GM12878 (cell line): ENCODE measurements at regions of chr14 and their contacts with region 1.

Region 1: DNA sequence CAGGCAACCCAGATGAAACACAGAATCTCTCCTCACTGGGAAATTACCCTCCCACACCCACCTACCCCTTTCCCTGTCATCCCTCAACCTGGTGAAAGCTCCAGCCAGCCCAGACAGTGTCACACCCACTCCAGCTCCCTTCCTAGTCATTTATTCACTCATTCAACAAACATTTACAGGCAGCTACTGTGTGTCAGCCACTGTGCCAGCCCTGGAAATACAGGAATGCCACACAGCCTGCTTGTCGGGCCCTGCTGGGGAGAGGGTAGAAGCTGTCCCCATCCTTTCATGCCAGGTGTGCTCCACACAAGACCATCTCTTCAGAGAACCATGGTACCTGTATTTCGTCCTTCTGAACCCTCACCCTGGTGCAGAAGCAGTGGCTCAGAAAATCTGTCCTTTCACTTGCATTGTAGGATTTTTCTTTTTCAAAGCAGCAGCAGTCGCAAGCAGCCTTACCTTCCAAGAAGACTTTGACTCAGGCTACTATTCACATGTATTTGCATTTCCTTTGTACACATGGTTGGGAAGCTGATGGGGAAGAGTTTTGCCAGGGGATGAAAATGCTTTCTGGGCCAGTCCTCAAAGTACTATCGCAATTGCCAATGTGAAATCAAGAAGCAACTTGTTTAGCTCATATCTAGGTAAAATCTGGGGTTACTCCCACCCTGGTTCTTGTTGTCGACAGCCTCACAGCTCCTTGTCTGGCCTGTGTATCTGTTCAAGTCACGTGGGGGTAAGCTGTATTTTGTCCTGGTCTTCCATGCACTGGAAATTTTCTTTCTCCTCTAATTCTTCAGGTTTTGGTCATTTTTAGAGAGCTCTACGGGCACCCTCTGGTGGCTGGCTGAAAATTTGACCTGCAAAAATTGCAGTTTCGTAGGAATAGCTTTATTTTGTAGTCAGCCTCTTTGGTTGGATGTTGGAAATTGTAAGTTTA is 147.4 kb upstream of the EGLN3 start:
- DNase-seq: peak; percentile 36
- ATAC-seq: peak; percentile 59
- H3K4me3 ChIP-seq: no peak overlapping the region
- H3K27ac ChIP-seq: no peak overlapping the region
- H3K4me1 ChIP-seq: no peaks in the 10 kb centered on the region
- H3K27me3 ChIP-seq: no peaks in the 10 kb centered on the region
- CTCF ChIP-seq: peak; percentile 57 to 74 (median 63); a peak in 5 of 6 replicates
- EP300 ChIP-seq: no peak
- POLR2A ChIP-seq: no peak
- RAD21 ChIP-seq: peak; percentile 92

Region 2: DNA sequence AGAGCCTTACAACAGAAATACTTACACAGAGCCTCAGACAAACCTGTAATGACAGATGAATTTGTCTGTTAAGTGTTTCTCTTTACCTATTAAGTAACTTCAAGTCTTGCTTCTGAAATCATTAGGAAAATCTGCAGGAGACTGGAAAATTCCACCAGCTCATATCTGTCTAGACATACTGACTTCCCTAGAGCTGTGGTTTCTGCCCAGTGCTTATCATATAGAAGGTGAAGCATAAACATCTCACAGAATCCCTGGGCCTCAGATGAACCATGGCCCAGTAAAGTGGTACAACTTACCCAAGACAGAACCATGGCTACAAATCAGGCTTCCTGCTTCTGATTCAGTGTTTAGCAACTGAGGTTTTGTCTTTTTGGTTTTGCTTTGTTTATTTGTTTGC is 239.0 kb before region 1 on chr14:
- CTCF ChIA-PET with region 1: interaction called, 18 read pairs
- POLR2A ChIA-PET with region 1: no interaction called
- RAD21 ChIA-PET with region 1: interaction called, 12 read pairs
- SMC1A ChIA-PET with region 1: interaction called, 9 read pairs
- in situ Hi-C with region 1: no loop called
- intact Hi-C with region 1: no loop called
- DNase-seq: no peak
- ATAC-seq: peak; percentile 28; the same call in 1 of the 3 replicates
- H3K4me3 ChIP-seq: no peak overlapping the region
- H3K27ac ChIP-seq: no peak overlapping the region
- H3K4me1 ChIP-seq: peaks cover 3% of the 10 kb centered on the region; the same call in 1 of the 2 replicates
- H3K27me3 ChIP-seq: no peaks in the 10 kb centered on the region
- CTCF ChIP-seq: no peak
- EP300 ChIP-seq: no peak
- POLR2A ChIP-seq: no peak
- RAD21 ChIP-seq: no peak

Region 3: DNA sequence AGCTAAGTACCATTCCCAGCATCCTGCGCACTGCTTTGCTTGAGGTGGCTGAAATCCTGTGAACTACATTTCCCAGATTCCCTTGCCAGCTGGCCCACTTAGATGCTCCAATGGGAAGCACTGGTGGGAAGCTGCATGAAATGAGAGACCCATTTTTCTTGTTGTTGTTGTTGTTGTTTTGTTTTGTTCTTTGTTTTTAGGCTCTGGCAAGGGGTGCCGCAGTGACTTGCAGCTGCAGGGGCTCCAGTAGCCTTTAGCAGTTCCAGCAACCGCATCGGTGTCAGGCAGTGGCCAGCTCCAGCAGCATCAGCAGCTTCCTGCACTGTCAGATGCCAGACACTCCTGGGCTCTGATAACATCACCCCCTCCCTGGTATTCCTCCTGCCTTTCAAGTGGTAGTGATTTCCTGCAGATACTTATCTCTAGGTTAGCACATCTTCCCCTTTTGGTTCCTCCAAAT is 138.6 kb before region 1 on chr14:
- CTCF ChIA-PET with region 1: interaction called, 23 read pairs
- POLR2A ChIA-PET with region 1: no interaction called
- RAD21 ChIA-PET with region 1: interaction called, 19 read pairs
- SMC1A ChIA-PET with region 1: interaction called, 31 read pairs
- in situ Hi-C with region 1: no loop called
- intact Hi-C with region 1: no loop called
- DNase-seq: no peak
- ATAC-seq: no peak
- H3K4me3 ChIP-seq: no peak overlapping the region
- H3K27ac ChIP-seq: no peak overlapping the region
- H3K4me1 ChIP-seq: peaks cover 15% of the 10 kb centered on the region
- H3K27me3 ChIP-seq: no peaks in the 10 kb centered on the region
- CTCF ChIP-seq: no peak
- EP300 ChIP-seq: no peak
- POLR2A ChIP-seq: no peak
- RAD21 ChIP-seq: no peak

Region 4: GRCh38 chr14:34003691-34004090 is 94.6 kb before region 1 on chr14:
- CTCF ChIA-PET with region 1: interaction called, 16 read pairs
- POLR2A ChIA-PET with region 1: no interaction called
- RAD21 ChIA-PET with region 1: interaction called, 5 read pairs
- SMC1A ChIA-PET with region 1: interaction called, 8 read pairs
- in situ Hi-C with region 1: no loop called
- intact Hi-C with region 1: no loop called
- DNase-seq: no peak
- ATAC-seq: peak; percentile 19; the same call in 2 of the 3 replicates
- H3K4me3 ChIP-seq: no peak overlapping the region
- H3K27ac ChIP-seq: no peak overlapping the region
- H3K4me1 ChIP-seq: peaks cover 6% of the 10 kb centered on the region
- H3K27me3 ChIP-seq: no peaks in the 10 kb centered on the region
- CTCF ChIP-seq: no peak
- EP300 ChIP-seq: no peak
- POLR2A ChIP-seq: no peak
- RAD21 ChIP-seq: no peak

Region 5: GRCh38 chr14:34051966-34052657 is 46.2 kb before region 1 on chr14:
- CTCF ChIA-PET with region 1: interaction called, 25 read pairs
- POLR2A ChIA-PET with region 1: interaction called, 3 read pairs
- RAD21 ChIA-PET with region 1: interaction called, 44 read pairs
- SMC1A ChIA-PET with region 1: interaction called, 79 read pairs
- in situ Hi-C with region 1: no loop called
- intact Hi-C with region 1: no loop called
- DNase-seq: peak; percentile 76
- ATAC-seq: peak; percentile 78
- H3K4me3 ChIP-seq: no peak overlapping the region
- H3K27ac ChIP-seq: no peak overlapping the region
- H3K4me1 ChIP-seq: peaks cover 28% of the 10 kb centered on the region
- H3K27me3 ChIP-seq: no peaks in the 10 kb centered on the region
- CTCF ChIP-seq: no peak
- EP300 ChIP-seq: peak in 1 of 2 experiments; percentile 49; a peak in 1 of 4 replicates
- POLR2A ChIP-seq: no peak
- RAD21 ChIP-seq: no peak

Region 6: DNA sequence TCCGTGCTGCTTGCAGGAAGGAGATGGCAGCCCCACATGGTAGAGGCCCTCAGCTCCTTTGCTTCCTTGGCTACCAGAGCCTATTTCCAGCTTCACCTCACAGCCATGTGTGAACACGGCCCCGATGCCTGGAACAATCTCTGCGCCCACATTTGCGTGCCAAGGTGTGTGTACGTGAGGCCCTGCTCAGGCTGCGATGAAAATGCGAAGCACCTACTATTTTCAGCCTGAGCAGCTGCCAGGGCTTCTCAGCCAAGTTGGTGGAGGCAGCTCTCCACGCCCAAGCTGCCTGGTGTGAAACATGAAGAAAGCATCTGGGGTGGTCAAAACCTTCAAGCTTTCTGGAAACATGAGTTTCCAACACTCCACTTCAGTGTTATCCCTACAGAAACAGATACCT is 30.4 kb after region 1 on chr14:
- CTCF ChIA-PET with region 1: interaction called, 13 read pairs
- POLR2A ChIA-PET with region 1: interaction called, 3 read pairs
- RAD21 ChIA-PET with region 1: interaction called, 4 read pairs
- SMC1A ChIA-PET with region 1: interaction called, 9 read pairs
- in situ Hi-C with region 1: no loop called
- intact Hi-C with region 1: no loop called
- DNase-seq: no peak
- ATAC-seq: no peak
- H3K4me3 ChIP-seq: no peak overlapping the region
- H3K27ac ChIP-seq: no peak overlapping the region
- H3K4me1 ChIP-seq: no peaks in the 10 kb centered on the region
- H3K27me3 ChIP-seq: no peaks in the 10 kb centered on the region; a peak in 1 of 4 replicates
- CTCF ChIP-seq: no peak
- EP300 ChIP-seq: no peak
- POLR2A ChIP-seq: no peak
- RAD21 ChIP-seq: no peak

Region 7: DNA sequence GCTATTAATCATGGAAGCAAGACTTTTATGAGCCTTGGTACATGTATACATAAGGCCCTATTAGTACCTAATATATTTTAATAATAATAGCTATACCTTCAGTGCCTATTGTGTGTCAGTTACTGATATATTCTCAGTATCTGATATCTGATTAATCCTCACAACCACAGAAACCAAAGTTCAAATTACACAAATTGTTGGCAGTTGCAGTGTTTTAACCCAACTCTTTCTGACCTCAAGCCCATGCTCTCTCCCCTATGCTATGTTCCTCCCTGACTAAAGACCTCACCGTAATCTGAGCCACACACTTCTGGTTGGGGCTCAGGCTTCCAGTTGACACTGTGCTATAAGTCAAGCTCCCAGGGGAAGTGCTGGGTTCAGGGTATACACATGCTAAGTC is 149.3 kb after region 1 on chr14:
- CTCF ChIA-PET with region 1: no interaction called
- POLR2A ChIA-PET with region 1: no interaction called
- RAD21 ChIA-PET with region 1: no interaction called
- SMC1A ChIA-PET with region 1: no interaction called
- in situ Hi-C with region 1: no loop called
- intact Hi-C with region 1: no loop called
- DNase-seq: no peak
- ATAC-seq: no peak
- H3K4me3 ChIP-seq: no peak overlapping the region
- H3K27ac ChIP-seq: no peak overlapping the region
- H3K4me1 ChIP-seq: no peaks in the 10 kb centered on the region
- H3K27me3 ChIP-seq: no peaks in the 10 kb centered on the region
- CTCF ChIP-seq: no peak
- EP300 ChIP-seq: no peak
- POLR2A ChIP-seq: no peak
- RAD21 ChIP-seq: no peak

Region 8: DNA sequence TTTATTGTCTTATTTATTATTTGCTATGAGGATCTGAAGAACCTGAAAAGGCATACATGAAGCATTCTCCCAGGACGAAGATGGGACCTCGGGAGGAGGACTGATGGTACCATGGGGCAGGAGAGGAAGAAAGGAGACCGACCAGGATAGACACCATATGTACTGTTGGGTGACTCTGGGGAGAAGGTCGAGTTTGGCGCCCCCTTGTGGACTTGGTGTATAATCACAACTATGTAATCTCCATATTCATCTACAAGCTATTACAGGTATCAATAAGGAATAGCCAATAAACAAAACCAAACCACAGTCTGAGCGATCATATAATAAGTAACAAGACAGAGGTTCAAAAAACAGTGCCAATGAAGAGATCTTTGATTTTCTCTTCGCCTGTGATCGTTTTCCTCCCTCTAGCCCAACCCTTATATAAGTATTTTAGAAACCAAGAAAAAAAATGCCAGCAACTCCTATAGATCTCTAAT is 224.7 kb after region 1 on chr14:
- CTCF ChIA-PET with region 1: interaction called, 7 read pairs
- POLR2A ChIA-PET with region 1: no interaction called
- RAD21 ChIA-PET with region 1: interaction called, 9 read pairs
- SMC1A ChIA-PET with region 1: interaction called, 12 read pairs
- in situ Hi-C with region 1: no loop called
- intact Hi-C with region 1: loop called (anchors 5 kb)
- DNase-seq: no peak
- ATAC-seq: peak; percentile 95
- H3K4me3 ChIP-seq: no peak overlapping the region
- H3K27ac ChIP-seq: no peak overlapping the region
- H3K4me1 ChIP-seq: no peaks in the 10 kb centered on the region
- H3K27me3 ChIP-seq: no peaks in the 10 kb centered on the region
- CTCF ChIP-seq: peak; percentile 70 to 72 (median 71)
- EP300 ChIP-seq: no peak
- POLR2A ChIP-seq: no peak
- RAD21 ChIP-seq: no peak

Region 9: DNA sequence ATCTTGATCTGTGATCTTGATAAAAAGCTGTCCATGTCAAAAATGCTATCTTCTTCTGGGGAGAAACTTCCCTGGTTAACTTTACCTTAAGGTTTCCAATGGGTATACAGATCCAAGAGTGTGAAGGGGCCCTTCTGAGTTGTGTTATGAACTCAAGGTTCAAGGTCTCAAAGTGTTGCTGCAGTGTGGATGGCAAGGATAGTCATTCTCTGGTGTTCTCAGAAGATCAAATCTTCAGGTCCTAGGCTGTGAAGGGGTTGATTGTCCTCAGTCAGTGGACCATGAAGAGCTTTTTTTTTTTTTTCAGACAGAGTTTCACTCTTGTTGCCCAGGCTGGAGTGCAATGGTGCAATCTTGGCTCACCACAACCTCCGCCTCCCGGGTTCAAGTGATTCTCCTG is 249.4 kb after region 1 on chr14:
- CTCF ChIA-PET with region 1: no interaction called
- POLR2A ChIA-PET with region 1: no interaction called
- RAD21 ChIA-PET with region 1: no interaction called
- SMC1A ChIA-PET with region 1: no interaction called
- in situ Hi-C with region 1: no loop called
- intact Hi-C with region 1: no loop called
- DNase-seq: peak; percentile 44
- ATAC-seq: peak; percentile 92
- H3K4me3 ChIP-seq: no peak overlapping the region
- H3K27ac ChIP-seq: peak overlapping the region; percentile 39; the same call in 1 of the 2 replicates
- H3K4me1 ChIP-seq: no peaks in the 10 kb centered on the region
- H3K27me3 ChIP-seq: no peaks in the 10 kb centered on the region
- CTCF ChIP-seq: no peak
- EP300 ChIP-seq: no peak
- POLR2A ChIP-seq: no peak
- RAD21 ChIP-seq: no peak